ENCODE measurements at regions of chr12 and their contacts with region 1.

Region 1: GRCh38 chr12:79737875-79738718 is 47.3 kb upstream of the PAWR start:
- DNase-seq: peak; percentile 17
- H3K4me3 ChIP-seq: no peak overlapping the region
- CTCF ChIP-seq: peak; percentile 43

Region 2: DNA sequence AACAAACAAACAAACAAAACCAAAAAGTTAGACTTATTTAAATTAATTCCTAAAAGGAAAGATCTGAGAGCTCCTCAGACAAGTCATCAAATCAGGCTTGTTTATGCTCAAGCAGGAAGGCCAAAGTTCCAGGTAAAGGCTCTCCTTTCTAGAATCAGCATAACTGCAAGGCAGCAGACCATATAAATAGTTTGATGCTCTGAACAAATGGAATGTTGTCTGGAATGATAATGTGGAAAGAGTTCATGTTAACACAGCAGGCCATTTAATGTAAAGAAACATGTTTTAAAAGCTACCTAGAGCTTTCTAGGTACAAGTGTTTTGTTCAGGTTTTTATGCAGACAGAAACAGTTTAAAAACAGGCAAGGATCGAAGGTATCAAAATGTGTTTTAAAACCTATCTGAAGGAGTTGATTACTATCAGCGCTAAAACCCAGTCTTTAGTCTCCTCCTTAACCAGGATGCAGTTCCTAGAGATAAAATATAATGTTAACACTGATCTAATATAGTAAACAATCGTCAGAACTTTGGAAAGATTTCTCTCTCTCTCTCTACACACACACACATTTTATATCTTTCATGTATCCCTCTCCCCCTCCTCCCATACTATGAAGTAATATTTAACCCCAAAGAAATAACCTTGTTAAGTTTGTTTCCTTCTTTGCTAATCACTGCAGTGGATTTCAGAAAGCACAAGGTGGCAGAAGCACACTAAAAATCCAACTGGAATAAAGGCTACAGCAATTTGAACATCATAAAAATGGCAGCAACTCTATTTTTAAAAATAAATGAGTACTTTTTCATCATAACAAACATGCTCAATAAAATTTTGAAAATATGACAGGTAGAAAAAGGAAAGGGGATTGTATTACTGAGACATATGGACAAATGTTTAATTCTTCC is 182.8 kb before region 1 on chr12:
- CTCF ChIA-PET with region 1: interaction called, 19 read pairs
- POLR2A ChIA-PET with region 1: no interaction called
- DNase-seq: no peak
- H3K4me3 ChIP-seq: no peak overlapping the region
- CTCF ChIP-seq: peak; percentile 42

Region 3: DNA sequence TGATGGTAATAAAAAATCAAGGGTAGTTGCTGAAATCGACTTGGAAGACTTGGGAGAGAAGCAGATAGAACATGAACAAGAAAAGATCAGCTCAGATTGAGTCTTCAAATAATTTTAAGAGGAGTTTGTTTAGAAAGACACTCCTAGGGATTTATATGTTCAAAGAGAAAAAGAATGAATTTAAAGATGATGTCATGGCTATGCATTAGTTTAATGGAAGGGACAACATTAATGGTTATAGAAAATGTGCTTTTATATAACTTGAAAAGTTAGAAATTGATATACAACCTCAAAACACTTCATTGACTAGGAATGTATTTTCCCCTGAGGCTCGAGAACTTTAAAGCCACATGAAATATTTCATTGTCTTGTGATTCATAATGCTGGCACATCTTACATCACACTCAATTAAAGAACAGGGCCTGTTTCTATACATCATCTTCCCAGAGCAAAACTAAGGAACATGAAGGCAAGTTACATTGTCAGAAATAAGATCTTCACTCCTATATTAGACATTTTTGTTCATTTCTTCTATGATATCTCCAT is 12.2 kb before region 1 on chr12:
- CTCF ChIA-PET with region 1: interaction called, 12 read pairs
- POLR2A ChIA-PET with region 1: no interaction called
- DNase-seq: peak; percentile 36
- H3K4me3 ChIP-seq: no peak overlapping the region
- CTCF ChIP-seq: no peak